ENCODE measurements at regions of chr1 and their contacts with region 1.

Region 1: GRCh38 chr1:16644193-16644481 is 22.6 kb downstream of the RNU1-3 start:
- DNase-seq: no peak
- ATAC-seq: peak; percentile 46
- H3K4me3 ChIP-seq: peak overlapping the region; percentile 62
- H3K4me3 Mint-ChIP-seq: no peak overlapping the region
- H3K27ac ChIP-seq: peak overlapping the region; percentile 84 to 89
- H3K27ac Mint-ChIP-seq: no peak overlapping the region
- H3K4me1 ChIP-seq: peaks cover 49% of the 10 kb centered on the region
- H3K4me1 Mint-ChIP-seq: peaks cover 4% of the 10 kb centered on the region
- H3K27me3 ChIP-seq: no peaks in the 10 kb centered on the region
- H3K27me3 Mint-ChIP-seq: no peaks in the 10 kb centered on the region
- CTCF ChIP-seq: no peak

Region 2: GRCh38 chr1:15975805-15976680 is 668.1 kb before region 1 on chr1 and contains the start of gene ZBTB17:
- CTCF ChIA-PET with region 1: no interaction called
- POLR2A ChIA-PET with region 1: no interaction called
- intact Hi-C with region 1: loop called in 1 of 2 experiments (anchors 10 kb)
- DNase-seq: peak; percentile 91 to 99 (median 94)
- ATAC-seq: peak; percentile 92
- H3K4me3 ChIP-seq: peak within 1 kb of the TSS; percentile 91
- H3K4me3 Mint-ChIP-seq: peak within 1 kb of the TSS; percentile 99
- H3K27ac ChIP-seq: peak within 1 kb of the TSS; percentile 67 to 70
- H3K27ac Mint-ChIP-seq: peak within 1 kb of the TSS; percentile 92
- H3K4me1 ChIP-seq: peaks cover 37% of the 10 kb centered on the region
- H3K4me1 Mint-ChIP-seq: peaks cover 34% of the 10 kb centered on the region
- H3K27me3 ChIP-seq: no peaks in the 10 kb centered on the region
- H3K27me3 Mint-ChIP-seq: no peaks in the 10 kb centered on the region
- CTCF ChIP-seq: no peak
- total RNA-seq, gene ZBTB17: 70.2 to 78.1 TPM

Region 3: GRCh38 chr1:16464903-16465625 is 179.1 kb before region 1 on chr1:
- CTCF ChIA-PET with region 1: no interaction called
- POLR2A ChIA-PET with region 1: no interaction called
- intact Hi-C with region 1: no loop called
- DNase-seq: no peak
- ATAC-seq: no peak
- H3K4me3 ChIP-seq: no peak overlapping the region
- H3K4me3 Mint-ChIP-seq: no peak overlapping the region
- H3K27ac ChIP-seq: no peak overlapping the region
- H3K27ac Mint-ChIP-seq: no peak overlapping the region
- H3K4me1 ChIP-seq: no peaks in the 10 kb centered on the region
- H3K4me1 Mint-ChIP-seq: peaks cover 25% of the 10 kb centered on the region
- H3K27me3 ChIP-seq: no peaks in the 10 kb centered on the region
- H3K27me3 Mint-ChIP-seq: no peaks in the 10 kb centered on the region
- CTCF ChIP-seq: no peak

Region 4: DNA sequence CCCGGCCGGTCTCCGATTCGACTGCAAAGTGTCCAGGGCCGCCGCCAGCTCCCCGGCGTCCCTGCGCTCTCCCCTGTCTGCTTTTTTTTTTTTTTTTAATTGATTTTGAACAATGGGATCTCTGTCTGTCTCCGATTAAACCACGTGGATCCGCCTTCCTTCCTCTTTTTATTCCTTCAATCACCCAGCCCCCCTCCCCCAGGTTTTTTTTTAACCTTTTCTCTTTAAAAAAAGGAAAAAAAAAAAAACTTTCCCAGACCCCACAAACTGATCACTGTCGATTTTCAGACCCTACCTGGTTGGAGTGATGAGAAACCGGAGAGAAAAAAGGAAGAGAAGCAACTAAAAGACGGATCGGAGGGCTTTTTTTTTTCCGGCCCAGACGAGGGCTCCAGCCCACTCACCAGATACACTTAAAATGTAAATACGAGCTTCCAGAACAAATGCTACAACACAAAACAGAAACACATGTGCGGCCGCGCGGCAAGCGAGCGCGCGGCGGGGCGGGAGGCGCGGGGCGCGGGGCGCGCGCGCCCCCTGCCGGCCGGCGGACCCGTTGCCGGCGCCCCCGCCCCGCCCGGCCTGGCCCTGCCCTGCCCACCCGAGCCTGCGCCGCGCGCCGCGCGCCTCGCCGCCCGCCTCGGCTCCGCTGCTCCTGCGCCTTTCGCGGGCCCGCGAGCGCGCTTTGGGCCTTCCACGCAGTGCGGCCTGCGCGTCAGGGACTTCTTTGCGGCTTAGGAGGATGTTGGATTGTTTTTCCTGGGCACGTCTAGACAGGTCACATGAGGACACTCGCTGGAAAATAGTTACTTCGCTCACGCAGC is 795.3 kb after region 1 on chr1 and contains the start of gene RCC2:
- CTCF ChIA-PET with region 1: no interaction called
- POLR2A ChIA-PET with region 1: interaction called, 4 read pairs
- intact Hi-C with region 1: loop called in 1 of 2 experiments (anchors 5 kb)
- DNase-seq: peak; percentile 51 to 92 (median 68)
- ATAC-seq: peak; percentile 77
- H3K4me3 ChIP-seq: peak within 1 kb of the TSS; percentile 94
- H3K4me3 Mint-ChIP-seq: peak within 1 kb of the TSS; percentile 98
- H3K27ac ChIP-seq: peak within 1 kb of the TSS; percentile 77 to 78
- H3K27ac Mint-ChIP-seq: peak within 1 kb of the TSS; percentile 95
- H3K4me1 ChIP-seq: peaks cover 38% of the 10 kb centered on the region
- H3K4me1 Mint-ChIP-seq: peaks cover 45% of the 10 kb centered on the region
- H3K27me3 ChIP-seq: no peaks in the 10 kb centered on the region
- H3K27me3 Mint-ChIP-seq: no peaks in the 10 kb centered on the region
- CTCF ChIP-seq: no peak
- total RNA-seq, gene RCC2: 20.1 to 21.0 TPM

Region 5: GRCh38 chr1:17831619-17832018 is 1187.5 kb after region 1 on chr1:
- CTCF ChIA-PET with region 1: no interaction called
- POLR2A ChIA-PET with region 1: no interaction called
- intact Hi-C with region 1: no loop called
- DNase-seq: no peak
- ATAC-seq: no peak
- H3K4me3 ChIP-seq: no peak overlapping the region
- H3K4me3 Mint-ChIP-seq: no peak overlapping the region
- H3K27ac ChIP-seq: no peak overlapping the region
- H3K27ac Mint-ChIP-seq: no peak overlapping the region
- H3K4me1 ChIP-seq: no peaks in the 10 kb centered on the region
- H3K4me1 Mint-ChIP-seq: no peaks in the 10 kb centered on the region
- H3K27me3 ChIP-seq: no peaks in the 10 kb centered on the region
- H3K27me3 Mint-ChIP-seq: peaks cover 64% of the 10 kb centered on the region
- CTCF ChIP-seq: no peak